Mammary epithelial cell (primary cell): ENCODE measurements at regions of chr17 and their contacts with region 1.

Region 1: DNA sequence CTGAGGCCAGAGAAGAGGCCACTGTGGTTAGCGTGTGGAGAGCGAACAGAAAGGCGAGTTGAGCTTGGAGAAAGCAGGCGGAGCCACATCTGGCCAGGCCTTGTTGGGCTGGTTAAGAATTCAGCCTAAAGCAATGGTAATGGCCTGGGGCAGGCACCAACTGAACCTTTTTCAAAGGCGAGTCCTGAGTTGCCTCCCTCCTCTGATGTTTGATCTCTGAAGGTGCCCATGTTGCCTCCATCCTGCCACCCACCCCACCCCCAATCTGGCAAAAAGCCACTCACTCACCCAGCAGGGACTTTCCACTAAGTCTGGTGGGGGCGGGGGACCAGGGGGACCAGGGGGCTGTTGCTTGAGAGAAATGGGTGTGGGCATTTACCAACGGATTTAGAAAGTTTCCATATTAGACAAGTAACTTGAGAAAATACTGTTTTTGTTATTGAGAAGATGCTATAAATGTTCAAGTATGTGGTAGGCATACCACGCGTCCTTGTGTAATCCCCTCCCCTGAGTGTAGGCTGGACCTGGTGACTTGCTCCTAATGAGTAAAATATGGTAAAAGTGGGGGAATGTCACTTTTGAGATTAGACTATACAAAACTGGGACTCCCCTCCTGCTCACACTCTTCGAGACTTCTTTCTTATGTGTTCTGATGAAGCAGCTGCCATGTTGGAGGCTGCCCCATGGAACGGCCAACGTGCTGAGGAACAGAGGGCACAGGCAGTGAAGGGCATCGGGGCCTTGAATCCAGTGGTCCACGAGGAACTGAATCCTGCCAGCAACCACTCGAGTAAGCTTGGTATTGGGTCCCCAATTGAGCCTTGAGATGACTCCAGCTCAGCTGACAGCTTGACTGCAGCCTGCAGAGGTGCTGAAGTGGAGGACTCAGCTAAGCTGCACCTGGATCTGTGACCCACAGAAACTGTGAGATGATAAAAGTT is 29.9 kb upstream of the TNS4 start:
- DNase-seq: no peak
- H3K4me3 ChIP-seq: no peak overlapping the region
- H3K27ac ChIP-seq: peak overlapping the region; percentile 36
- H3K4me1 ChIP-seq: peaks cover 36% of the 10 kb centered on the region
- H3K27me3 ChIP-seq: no peaks in the 10 kb centered on the region
- CTCF ChIP-seq: no peak

Region 2: GRCh38 chr17:40177275-40177874 is 353.9 kb before region 1 on chr17 and contains the start of gene RAPGEFL1:
- CTCF ChIA-PET with region 1: no interaction called
- dilution Hi-C with region 1: loop called (anchors 5 kb)
- in situ Hi-C with region 1: no loop called
- intact Hi-C with region 1: no loop called
- DNase-seq: peak; percentile 73
- H3K4me3 ChIP-seq: peak within 1 kb of the TSS; percentile 60 to 80 (median 65)
- H3K27ac ChIP-seq: peak within 1 kb of the TSS; percentile 85
- H3K4me1 ChIP-seq: peaks cover 47% of the 10 kb centered on the region
- H3K27me3 ChIP-seq: no peaks in the 10 kb centered on the region
- CTCF ChIP-seq: no peak
- total RNA-seq, gene RAPGEFL1: 19.7 to 25.2 TPM

Region 3: GRCh38 chr17:40362696-40363110 is 168.6 kb before region 1 on chr17:
- CTCF ChIA-PET with region 1: no interaction called
- dilution Hi-C with region 1: no loop called
- in situ Hi-C with region 1: no loop called
- intact Hi-C with region 1: loop called (anchors 1 kb)
- DNase-seq: peak; percentile 68
- H3K4me3 ChIP-seq: peak overlapping the region in 2 of 3 experiments; percentile 53 to 55
- H3K27ac ChIP-seq: no peak overlapping the region
- H3K4me1 ChIP-seq: peaks cover 8% of the 10 kb centered on the region
- H3K27me3 ChIP-seq: no peaks in the 10 kb centered on the region
- CTCF ChIP-seq: peak; percentile 63 to 84

Region 4: DNA sequence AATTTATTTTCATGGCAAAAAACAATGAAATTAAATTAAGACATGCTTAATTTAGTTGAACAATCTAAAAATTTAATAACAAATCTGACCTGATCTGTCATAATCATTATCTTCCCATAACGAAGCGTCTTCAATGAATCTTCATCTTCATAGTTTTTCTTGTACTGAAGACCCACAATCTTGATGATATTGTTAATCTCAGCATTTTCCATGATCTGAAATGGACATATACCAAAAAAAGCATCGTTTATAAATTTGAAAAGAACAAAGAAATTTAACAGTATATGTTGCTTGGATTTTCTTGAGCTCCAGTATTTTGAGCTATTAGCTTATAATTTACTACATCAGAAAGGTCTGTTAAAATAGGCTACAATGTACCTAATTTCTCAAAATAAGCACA is 123.9 kb before region 1 on chr17:
- CTCF ChIA-PET with region 1: no interaction called
- dilution Hi-C with region 1: no loop called
- in situ Hi-C with region 1: no loop called
- intact Hi-C with region 1: no loop called
- DNase-seq: no peak
- H3K4me3 ChIP-seq: no peak overlapping the region
- H3K27ac ChIP-seq: no peak overlapping the region
- H3K4me1 ChIP-seq: no peaks in the 10 kb centered on the region
- H3K27me3 ChIP-seq: no peaks in the 10 kb centered on the region
- CTCF ChIP-seq: no peak

Region 5: DNA sequence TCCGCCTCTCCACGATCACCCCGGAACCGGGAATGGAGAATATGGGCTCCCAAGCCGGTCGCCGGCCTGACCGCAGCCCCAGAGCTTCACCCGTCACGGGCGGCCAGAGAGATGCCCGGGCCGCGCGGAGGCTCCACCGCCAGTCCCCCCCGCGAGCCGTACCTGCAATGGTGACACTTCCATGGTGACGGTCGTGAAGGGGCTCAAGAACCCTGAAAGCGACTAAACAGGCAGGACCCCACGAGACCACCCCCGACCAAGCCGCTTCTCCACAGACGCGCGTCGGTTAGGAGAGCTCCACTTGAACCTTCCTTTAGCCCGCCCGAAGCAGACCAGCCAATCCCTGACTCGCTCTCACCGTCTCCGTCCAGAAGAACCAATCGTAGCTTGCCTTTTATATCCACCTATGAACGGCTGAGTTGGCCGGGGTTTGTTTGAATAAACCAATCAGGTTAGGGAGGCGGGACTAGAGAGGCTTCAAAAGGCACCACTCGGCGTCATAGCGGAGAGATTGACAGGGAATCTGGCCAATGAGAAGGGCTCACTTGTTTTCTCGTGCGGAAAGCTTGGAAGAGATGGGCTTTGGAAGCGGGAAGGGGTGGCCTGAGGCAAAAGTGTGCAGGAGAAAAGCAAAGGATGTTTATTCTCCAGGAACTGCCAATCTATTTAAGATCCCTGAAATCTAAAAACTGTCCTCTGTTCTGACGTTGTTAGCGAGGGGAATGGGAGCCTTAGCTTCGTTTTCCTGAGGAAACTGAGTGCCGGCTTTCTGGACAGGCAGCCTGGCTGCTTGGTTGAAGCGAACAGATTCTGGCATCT is 113.5 kb before region 1 on chr17 and contains the start of gene TOP2A:
- CTCF ChIA-PET with region 1: no interaction called
- dilution Hi-C with region 1: loop called (anchors 5 kb)
- in situ Hi-C with region 1: no loop called
- intact Hi-C with region 1: loop called (anchors 1 kb)
- DNase-seq: peak; percentile 100
- H3K4me3 ChIP-seq: peak within 1 kb of the TSS; percentile 81 to 98 (median 89)
- H3K27ac ChIP-seq: peak within 1 kb of the TSS; percentile 74
- H3K4me1 ChIP-seq: peaks cover 15% of the 10 kb centered on the region
- H3K27me3 ChIP-seq: no peaks in the 10 kb centered on the region
- CTCF ChIP-seq: no peak
- total RNA-seq, gene TOP2A: 3.2 to 93.3 TPM

Region 6: DNA sequence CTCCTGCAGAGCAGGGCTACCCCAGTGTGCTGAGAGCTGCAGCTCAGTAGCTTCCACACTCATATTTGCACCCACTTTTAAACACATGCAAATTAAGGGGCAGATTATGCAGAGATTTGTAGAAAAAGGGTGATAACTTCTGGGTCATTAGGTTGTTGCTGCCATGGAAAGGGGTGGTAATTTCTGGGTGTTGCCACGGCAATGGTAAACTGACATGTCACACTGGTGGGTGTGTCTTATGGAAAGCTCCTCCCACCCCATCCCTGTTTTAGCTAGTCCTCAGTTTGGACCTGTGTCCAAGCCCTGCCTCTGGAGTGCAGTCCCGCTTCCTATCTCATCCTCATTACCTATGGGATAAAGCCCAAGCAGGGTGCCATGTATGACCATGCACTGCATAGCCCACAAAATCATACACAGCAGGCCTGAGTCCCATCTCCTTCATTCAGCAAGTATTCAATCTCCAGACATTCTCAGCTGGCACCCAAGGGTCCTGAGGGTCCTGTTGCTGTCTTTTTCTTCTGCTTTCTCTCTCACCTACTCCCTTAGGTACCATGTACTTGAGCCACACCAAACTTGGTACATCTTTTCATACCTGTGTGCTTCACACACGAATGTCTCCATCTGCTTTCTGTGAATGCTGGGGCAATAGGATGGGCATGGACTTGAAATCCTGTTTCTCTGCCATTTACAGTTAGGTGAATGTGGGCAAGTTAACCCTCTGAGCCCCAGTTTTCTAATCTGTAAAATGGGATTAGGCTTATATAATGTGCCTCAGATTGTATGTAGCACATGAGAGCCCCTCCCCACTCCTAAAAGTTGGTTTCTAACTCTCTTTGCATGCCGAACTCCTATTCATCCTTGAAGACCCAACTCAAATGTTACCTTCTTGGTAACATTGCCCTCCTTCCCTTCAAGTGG is 58.5 kb before region 1 on chr17:
- CTCF ChIA-PET with region 1: interaction called, 4 read pairs
- dilution Hi-C with region 1: no loop called
- in situ Hi-C with region 1: no loop called
- intact Hi-C with region 1: loop called (anchors 1 kb)
- DNase-seq: peak; percentile 85
- H3K4me3 ChIP-seq: no peak overlapping the region
- H3K27ac ChIP-seq: peak overlapping the region; percentile 23
- H3K4me1 ChIP-seq: peaks cover 15% of the 10 kb centered on the region
- H3K27me3 ChIP-seq: no peaks in the 10 kb centered on the region
- CTCF ChIP-seq: no peak

Region 7: GRCh38 chr17:40499551-40500174 is 31.7 kb before region 1 on chr17:
- CTCF ChIA-PET with region 1: interaction called, 6 read pairs
- dilution Hi-C with region 1: no loop called
- in situ Hi-C with region 1: loop called (anchors 5 kb)
- intact Hi-C with region 1: loop called (anchors 1 kb)
- DNase-seq: peak; percentile 71
- H3K4me3 ChIP-seq: peak overlapping the region; percentile 69 to 98 (median 77)
- H3K27ac ChIP-seq: peak overlapping the region; percentile 96
- H3K4me1 ChIP-seq: peaks cover 37% of the 10 kb centered on the region
- H3K27me3 ChIP-seq: no peaks in the 10 kb centered on the region
- CTCF ChIP-seq: peak in 1 of 2 donors; percentile 16

Region 8: DNA sequence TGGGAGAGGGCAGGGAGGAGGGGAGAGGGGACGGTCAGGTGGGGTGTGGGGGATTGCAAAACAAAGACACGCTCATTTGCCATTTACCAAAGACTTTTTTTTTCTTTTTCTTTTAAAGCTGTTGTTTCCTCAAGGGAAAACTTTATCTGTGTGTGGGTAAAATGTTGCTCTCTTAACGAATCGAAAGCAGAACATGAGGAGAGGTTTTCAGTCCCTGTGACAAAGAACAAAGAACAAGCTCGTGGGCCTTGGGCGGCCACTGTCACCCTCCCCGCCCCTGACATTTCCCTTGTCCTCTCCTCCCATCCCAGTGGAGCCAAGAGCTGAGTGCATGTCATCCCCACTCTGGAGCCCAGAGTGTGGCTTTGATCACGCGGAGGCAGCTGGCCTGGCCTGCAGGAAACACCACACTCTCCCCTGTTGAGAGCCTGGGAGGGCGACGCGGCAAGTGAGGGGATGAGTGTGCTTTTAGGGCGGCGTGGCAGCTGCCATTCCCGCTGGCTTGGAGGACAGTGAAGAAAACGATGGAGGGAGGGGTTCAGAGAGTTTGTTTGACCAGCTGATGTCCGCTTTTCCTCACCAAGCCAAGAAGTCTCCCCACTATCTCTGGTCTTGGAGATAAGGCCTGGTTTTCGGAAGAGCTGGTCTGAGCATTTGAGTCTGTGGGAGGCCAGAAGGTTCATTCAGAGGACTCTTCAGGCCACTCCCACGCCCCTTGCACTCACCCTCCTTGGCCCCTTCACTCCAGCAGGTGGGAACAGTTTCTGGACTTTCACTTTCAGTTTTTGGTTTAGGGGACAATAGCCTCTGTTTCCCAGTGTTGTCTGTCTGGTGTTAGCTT is 22.6 kb after region 1 on chr17:
- CTCF ChIA-PET with region 1: no interaction called
- dilution Hi-C with region 1: no loop called
- in situ Hi-C with region 1: no loop called
- intact Hi-C with region 1: no loop called
- DNase-seq: no peak
- H3K4me3 ChIP-seq: no peak overlapping the region
- H3K27ac ChIP-seq: no peak overlapping the region
- H3K4me1 ChIP-seq: peaks cover 19% of the 10 kb centered on the region
- H3K27me3 ChIP-seq: no peaks in the 10 kb centered on the region
- CTCF ChIP-seq: no peak